ENCODE measurements at regions of chr12 and their contacts with region 1.

Region 1: DNA sequence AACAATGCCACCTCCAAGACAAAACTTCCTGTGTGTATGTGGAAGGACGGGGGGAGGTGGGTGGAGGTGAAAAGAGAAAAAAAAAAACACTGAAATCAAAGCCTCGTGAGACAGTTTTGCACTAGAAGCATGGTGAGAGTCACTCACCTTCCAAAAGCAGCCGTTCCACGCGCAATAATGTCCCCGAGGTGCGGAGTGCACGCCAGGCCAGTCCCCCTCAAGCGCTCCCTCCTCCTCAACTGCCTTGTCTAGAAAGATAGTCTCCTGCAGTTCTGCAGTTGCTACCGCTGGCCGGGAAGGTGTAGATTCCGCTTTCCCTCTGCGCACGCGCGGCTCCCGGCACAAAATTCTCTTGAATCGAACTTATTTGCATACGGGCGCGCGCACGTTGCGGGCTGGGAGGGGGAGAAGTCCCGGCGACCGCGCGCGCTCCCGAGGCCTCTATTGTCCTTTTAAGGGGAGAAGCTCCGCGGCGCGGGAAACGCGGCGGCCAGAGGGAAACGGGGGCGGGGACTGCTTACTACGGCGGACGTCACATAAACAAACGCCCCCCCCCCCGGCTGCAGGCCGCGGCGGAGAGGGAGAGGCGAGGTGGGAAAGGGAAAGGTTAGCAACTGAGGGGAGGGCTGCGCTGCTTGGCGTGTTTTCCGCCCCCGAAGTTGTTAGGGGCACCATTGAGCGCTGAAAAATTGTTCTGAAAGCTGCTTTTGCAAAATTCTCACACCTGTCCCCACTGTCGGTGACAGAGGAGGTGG is at the start of gene SINHCAF:
- DNase-seq: peak; percentile 95
- H3K4me3 ChIP-seq: peak within 1 kb of the TSS; percentile 94
- H3K27ac ChIP-seq: peak within 1 kb of the TSS; percentile 81
- H3K27me3 ChIP-seq: no peaks in the 10 kb centered on the region
- CTCF ChIP-seq: no peak
- polyA plus RNA-seq, gene SINHCAF: 22.8 and 31.6 TPM in 2 replicates

Region 2: DNA sequence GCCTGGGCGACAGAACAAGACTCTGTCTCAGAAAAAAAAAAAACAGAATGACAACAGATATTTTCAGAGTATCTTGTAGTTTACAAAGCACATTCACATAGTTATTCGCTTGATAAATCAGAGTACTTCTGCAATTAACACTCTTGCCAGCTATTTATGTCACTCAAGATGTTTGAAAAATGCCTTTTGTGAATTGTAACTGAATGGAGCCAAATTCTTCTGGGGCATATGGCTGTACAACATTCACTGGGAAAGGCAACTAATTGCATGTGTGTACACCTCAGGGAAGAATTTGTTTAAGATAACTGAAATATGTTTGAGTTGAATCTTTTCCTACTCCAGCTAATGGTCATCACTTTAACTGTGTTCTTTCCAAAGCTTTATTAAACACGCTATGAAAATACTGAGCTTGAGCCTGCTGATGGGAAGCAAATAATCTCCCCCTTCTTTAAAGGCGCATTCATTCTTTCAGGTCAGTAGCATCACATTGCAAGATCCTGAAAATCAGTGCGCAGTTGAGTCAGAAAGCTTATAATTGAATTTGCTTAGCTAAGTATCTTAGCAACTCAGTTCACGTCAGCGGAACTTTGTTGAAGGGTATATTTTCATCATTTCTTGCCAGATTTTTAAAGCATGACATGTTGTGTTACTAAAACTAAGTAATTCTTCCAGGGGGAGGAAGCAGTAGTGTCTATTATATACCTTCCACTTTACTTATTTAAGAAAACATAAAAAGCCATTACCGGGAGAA is 66.7 kb before region 1 on chr12:
- CTCF ChIA-PET with region 1: no interaction called
- POLR2A ChIA-PET with region 1: no interaction called
- DNase-seq: no peak
- H3K4me3 ChIP-seq: no peak overlapping the region
- H3K27ac ChIP-seq: no peak overlapping the region
- H3K27me3 ChIP-seq: no peaks in the 10 kb centered on the region
- CTCF ChIP-seq: no peak

Region 3: GRCh38 chr12:31518680-31519227 is 192.7 kb after region 1 on chr12:
- CTCF ChIA-PET with region 1: no interaction called
- POLR2A ChIA-PET with region 1: interaction called, 12 read pairs
- DNase-seq: peak; percentile 99
- H3K4me3 ChIP-seq: peak overlapping the region; percentile 12; the same call in 1 of the 2 replicates
- H3K27ac ChIP-seq: peak overlapping the region; percentile 94
- H3K27me3 ChIP-seq: no peaks in the 10 kb centered on the region
- CTCF ChIP-seq: no peak